ENCODE measurements at regions of chr1 and their contacts with region 1.

Region 1: DNA sequence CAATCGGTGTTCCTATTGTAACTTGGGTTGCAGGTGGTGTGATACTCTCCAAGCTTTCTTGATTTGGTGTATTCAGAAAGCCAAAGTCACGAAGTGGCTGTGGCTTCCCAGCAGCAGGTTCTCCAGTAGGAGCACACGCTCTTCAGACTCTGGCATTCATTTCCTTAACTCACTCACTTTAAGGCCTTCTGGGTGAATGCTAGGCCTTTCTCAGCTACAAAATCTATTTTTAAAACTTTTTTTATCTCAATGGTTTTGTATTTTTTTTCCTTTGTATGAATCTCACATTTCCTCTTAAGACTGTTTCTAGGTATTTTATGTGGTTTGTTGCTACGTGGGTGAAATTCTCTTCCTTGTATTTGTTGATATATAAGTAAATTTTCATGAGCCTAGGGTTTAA is 22.9 kb upstream of the PKN2 start:
- DNase-seq: peak; percentile 7
- H3K4me3 Mint-ChIP-seq: peak overlapping the region; percentile 61
- H3K27ac Mint-ChIP-seq: peak overlapping the region; percentile 89
- H3K4me1 Mint-ChIP-seq: peaks cover 29% of the 10 kb centered on the region
- H3K27me3 Mint-ChIP-seq: no peaks in the 10 kb centered on the region

Region 2: DNA sequence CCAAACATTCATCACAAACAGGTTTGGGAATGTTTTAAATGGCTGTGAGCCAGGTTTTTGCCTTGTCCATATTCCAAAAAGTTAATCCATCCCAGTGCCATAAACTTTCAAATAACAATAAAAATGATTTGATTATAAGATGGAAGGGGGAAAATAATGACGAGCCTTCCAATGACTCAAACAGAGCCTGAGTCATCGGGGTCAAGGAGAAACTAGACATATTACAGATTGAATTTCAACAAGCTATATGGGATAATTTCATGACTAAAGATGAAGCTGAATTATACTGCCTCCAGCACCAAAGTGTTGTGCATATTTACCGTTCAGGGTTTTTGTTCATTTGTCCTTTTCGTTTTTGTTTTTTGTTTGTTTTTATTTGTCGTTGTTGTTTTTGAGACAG is 172.9 kb before region 1 on chr1:
- CTCF ChIA-PET with region 1: no interaction called
- POLR2A ChIA-PET with region 1: no interaction called
- DNase-seq: no peak
- H3K4me3 Mint-ChIP-seq: no peak overlapping the region
- H3K27ac Mint-ChIP-seq: no peak overlapping the region
- H3K4me1 Mint-ChIP-seq: no peaks in the 10 kb centered on the region
- H3K27me3 Mint-ChIP-seq: peaks cover 10% of the 10 kb centered on the region

Region 3: DNA sequence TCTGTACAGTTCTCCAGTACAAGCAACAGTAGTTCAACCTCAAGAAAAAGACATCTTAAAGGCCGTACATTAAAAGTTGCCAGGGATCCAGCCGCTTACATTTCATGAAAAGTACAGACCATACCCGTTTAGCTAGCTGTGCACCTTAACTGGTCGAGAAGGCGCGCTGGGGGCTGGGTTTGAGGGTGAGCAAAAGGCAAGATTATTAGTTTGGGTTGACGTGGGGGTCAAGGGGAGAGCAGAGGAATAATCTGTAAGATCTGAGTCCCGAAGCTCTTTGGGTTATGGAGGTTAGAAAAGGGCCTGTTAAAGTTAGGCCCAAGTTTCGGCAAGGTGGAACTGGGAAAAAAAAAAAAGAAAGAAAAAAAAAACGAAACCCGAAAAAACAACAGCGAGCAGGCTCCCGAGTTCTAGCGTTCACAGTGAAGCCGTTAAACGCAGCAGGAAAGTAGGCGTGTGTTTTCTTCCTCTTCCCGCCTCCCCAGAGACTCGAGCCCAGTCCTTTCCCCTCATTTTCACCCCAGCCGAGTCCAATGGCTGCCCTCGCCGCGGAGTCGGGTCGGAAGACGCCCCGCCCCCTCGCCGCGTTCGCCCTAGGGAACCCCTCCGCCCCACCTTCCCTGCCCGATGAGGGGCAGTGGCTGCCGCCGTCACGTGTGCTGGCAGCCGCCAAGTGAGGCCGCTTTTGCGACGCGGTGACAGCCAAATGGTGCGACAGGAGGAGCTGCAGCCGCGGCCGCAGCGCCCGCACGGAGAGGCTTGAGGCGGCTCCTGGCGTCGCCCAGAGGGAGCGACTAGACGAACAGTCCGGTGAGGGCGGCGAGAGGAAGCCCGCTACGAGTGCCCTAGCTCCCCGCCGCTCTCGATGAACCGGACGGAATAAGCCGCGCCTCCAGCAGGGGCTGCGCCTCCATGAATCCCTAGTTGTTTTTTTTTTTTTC is 22.6 kb after region 1 on chr1 and contains the start of gene PKN2:
- CTCF ChIA-PET with region 1: interaction called, 5 read pairs
- POLR2A ChIA-PET with region 1: interaction called, 11 read pairs
- DNase-seq: peak; percentile 98
- H3K4me3 Mint-ChIP-seq: peak within 1 kb of the TSS; percentile 92
- H3K27ac Mint-ChIP-seq: peak within 1 kb of the TSS; percentile 96
- H3K4me1 Mint-ChIP-seq: peaks cover 21% of the 10 kb centered on the region
- H3K27me3 Mint-ChIP-seq: no peaks in the 10 kb centered on the region
- total RNA-seq, gene PKN2: 26.6 to 30.7 TPM

Measured in activated CD4-positive, alpha-beta T cell treated with anti-CD3 and anti-CD28 coated beads, Interleukin-2, amount 10 ng/mL, durations not matched to agents 7 days and 5 days (primary cell).